Left cardiac atrium (tissue), 4 donors: ENCODE measurements at regions of chr14 and their contacts with region 1.

Region 1: GRCh38 chr14:74362361-74362915 is 14.2 kb downstream of the VRTN start:
- DNase-seq: peak; percentile 83
- ATAC-seq: peak; percentile 88 to 90

Region 2: DNA sequence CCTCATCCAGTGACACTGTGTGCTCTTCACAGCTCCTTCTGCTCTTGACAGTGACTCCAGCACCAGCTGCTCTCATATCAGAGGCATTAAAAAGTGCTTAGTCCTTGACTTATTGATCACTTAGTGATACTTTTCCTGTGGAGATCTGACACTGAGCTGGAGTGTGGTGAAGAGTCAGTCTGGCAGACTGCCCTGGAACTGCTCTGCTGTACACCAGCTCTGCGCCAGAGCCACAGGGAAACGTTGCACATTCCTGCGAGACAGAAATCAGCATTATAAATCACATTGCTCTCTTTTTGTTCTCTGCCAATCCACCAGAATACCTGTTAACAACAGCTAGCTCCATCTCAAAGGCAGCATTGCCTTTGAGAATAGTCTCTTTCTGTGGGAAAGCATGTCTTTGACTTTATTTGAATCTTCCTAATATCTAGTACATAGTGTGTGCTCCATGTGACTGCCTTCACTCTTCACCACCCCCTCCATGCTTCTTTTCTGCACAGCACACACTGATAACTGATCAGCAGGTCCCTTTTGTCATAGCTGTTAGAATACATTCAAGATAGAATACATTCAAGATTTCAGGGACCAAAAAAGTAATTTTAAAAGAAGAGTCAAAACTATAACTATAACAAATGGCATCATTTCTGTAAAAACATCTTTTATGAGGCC is 171.4 kb before region 1 on chr14:
- intact Hi-C with region 1: no loop called
- DNase-seq: no peak
- ATAC-seq: no peak

Region 3: DNA sequence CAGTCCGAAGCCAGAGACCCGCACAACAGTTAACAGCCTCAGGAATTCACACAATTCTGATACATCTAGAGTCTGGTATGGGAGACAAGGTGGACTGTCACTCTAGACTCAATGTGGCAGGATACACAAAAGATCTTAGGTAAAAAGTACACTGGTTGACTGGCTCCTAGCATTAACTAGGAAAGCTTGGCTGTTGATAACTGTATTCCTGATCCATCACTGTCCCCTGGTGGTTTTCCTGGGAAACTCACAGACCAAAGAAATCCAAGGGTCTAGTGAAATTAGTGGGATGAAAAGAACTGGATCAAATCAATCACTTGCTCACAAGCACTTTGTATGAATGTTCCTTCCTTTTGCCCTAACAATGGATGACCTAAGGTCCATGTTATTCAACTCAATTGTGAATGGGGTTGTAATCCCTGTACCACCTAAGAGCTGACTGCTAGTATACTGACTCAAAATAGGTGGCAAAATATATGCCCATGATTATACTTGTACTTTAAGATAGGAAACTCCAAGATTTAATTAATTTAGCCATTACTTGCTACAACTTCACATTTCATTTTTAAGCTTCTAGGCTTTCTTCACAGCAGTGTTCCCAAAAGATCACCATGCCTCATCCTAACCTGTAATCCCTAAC is 116.7 kb after region 1 on chr14:
- intact Hi-C with region 1: loop called (anchors 1 to 5 kb)
- DNase-seq: no peak
- ATAC-seq: no peak

Region 4: GRCh38 chr14:74493343-74494261 is 131.2 kb after region 1 on chr14 and contains the start of gene ISCA2:
- intact Hi-C with region 1: loop called in 1 of 2 experiments (anchors 5 kb)
- DNase-seq: peak; percentile 100
- ATAC-seq: peak; percentile 95
- total RNA-seq, gene ISCA2: 34.1 to 39.1 TPM